ENCODE measurements at regions of chr1 and their contacts with region 1.

Region 1: DNA sequence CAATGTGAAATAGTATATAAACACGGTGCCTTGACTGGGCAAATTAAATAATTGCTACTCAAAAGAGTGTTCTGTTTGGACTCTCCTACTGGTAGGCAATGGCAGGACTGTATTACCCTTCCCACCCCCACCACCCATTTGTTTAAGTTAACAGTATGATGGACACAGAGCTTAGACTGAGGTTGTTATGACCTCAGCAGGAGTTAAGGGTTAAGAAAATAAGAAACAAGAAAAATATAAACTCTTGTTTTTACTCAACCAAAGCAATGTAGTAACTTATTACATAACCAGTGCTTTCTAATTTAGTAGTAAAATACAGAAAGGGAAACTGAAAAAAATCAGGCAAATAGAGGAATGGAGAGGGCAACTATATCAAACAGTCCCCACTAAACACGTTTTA is 19.9 kb upstream of the SERPINC1 start:
- DNase-seq: no peak
- H3K4me3 ChIP-seq: no peak overlapping the region
- H3K27ac ChIP-seq: no peak overlapping the region
- H3K4me1 ChIP-seq: no peaks in the 10 kb centered on the region
- H3K27me3 ChIP-seq: no peaks in the 10 kb centered on the region
- CTCF ChIP-seq: no peak

Region 2: GRCh38 chr1:173590557-173590956 is 346.5 kb before region 1 on chr1:
- intact Hi-C with region 1: no loop called
- DNase-seq: no peak
- H3K4me3 ChIP-seq: no peak overlapping the region
- H3K27ac ChIP-seq: no peak overlapping the region
- H3K4me1 ChIP-seq: no peaks in the 10 kb centered on the region
- H3K27me3 ChIP-seq: no peaks in the 10 kb centered on the region
- CTCF ChIP-seq: no peak

Region 3: DNA sequence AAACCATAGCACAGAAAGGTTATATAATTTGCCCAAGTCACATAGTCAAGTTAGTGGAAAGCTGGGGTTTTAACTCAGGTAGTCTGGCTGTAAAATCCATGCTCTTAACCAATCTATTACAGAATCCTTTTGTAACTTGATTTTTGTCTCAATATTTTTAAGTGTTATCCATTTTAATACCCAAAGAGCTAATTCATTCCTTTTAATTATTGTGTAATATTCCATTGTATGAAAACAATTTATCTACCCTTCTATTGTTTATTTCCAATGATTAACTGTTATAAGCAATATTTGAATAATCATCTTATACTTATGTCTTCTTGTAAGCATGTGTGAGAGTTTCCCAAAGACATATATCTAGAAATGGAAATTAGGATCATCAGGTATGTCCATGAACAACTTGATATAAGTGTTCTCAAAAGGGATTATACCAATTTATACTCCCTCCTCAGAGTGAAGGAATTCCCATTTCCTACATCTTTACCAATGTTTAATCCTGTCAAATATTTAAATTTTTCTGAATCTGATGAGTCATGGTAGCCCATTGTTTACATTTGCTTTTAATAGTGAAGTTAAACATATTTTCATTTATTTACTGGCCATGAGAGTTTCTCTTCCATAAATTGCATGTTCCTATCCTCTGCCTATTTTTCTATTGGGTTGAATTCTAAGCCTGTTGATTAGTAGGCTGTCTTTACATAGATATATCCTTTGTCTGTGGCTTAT is 288.0 kb before region 1 on chr1:
- intact Hi-C with region 1: no loop called
- DNase-seq: no peak
- H3K4me3 ChIP-seq: no peak overlapping the region
- H3K27ac ChIP-seq: no peak overlapping the region
- H3K4me1 ChIP-seq: no peaks in the 10 kb centered on the region
- H3K27me3 ChIP-seq: no peaks in the 10 kb centered on the region
- CTCF ChIP-seq: no peak

Region 4: DNA sequence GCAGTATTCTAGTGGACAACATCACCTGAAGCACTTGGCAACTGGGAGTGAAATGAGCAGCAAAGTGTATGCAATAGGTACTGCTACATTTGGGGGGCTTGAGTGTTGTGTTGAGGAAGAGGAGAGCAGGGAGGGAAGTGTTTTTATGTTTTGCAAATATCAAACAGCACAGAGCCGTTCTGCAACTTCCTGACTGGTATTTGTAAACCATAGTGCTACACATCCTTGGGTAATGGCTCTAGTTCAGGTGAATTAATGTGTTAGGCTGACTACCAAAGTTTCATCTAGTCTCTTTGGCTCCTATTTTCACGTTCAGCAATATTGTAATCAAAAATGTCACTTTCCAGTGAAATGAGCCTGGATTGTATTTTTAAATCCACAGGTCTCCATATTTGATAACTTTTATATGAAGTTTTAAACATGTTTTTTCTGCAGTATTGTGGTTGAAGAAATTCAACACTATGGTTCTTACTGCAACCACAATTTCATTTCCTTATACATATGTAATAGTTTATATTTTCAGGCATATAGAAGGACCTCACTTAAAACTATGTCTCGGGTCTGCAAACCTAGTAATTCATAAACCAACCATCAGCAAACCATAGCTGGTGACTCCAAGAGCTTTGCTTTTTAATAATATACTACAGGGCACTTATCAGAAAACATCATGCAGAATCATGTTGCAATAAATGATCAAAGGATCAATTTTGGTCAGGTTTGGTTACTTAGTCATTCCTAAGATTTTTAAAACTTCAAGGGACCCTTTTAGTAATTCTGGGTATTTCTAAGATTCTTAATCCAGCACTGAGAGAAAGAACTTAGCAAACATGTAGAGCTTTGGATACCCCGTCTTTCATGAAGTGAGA is 50.1 kb before region 1 on chr1:
- intact Hi-C with region 1: no loop called
- DNase-seq: no peak
- H3K4me3 ChIP-seq: no peak overlapping the region
- H3K27ac ChIP-seq: no peak overlapping the region
- H3K4me1 ChIP-seq: no peaks in the 10 kb centered on the region
- H3K27me3 ChIP-seq: no peaks in the 10 kb centered on the region
- CTCF ChIP-seq: no peak

Region 5: DNA sequence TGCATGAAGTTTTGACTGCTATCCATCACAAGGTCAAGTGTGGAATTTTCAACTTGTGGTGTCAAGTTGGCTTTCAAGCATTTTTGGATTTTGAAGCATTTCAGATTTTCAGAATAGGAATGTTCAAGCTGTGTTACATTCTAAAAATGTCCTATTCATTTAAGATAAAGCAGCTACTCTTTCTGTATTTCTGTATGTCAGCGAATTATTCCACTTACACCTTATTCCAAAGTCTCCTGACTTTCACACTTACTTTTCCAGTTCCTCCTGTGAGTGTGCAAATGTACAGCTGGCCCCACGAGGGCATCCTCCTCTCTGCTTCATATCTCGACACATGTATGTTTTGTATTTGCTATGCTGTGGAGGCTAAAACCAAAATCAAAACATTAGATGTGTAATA is 33.2 kb after region 1 on chr1:
- intact Hi-C with region 1: loop called (anchors 5 kb)
- DNase-seq: no peak
- H3K4me3 ChIP-seq: no peak overlapping the region
- H3K27ac ChIP-seq: no peak overlapping the region
- H3K4me1 ChIP-seq: no peaks in the 10 kb centered on the region
- H3K27me3 ChIP-seq: no peaks in the 10 kb centered on the region
- CTCF ChIP-seq: no peak

Region 6: DNA sequence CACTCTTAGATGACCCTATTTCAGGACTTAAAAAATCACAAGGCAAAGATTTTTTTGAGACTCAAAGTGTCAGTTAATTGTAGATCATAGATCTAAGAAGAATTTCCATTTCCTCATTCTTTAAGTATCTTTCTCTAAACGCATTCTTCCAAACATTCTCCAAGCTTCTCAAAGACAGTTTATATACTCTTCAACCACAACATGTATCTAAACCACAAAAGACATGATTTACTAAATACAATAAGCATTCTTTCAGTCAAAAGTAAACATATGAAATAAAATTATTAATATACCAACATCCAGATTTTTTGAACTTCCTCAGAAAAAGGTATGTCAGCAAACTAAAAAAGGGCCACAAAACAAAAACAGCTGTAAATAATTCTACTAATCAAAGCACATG is 60.7 kb after region 1 on chr1:
- intact Hi-C with region 1: no loop called
- DNase-seq: no peak
- H3K4me3 ChIP-seq: no peak overlapping the region
- H3K27ac ChIP-seq: no peak overlapping the region
- H3K4me1 ChIP-seq: peaks cover 0 to 34% (median 4%) of the 10 kb centered on the region in 4 donors
- H3K27me3 ChIP-seq: no peaks in the 10 kb centered on the region
- CTCF ChIP-seq: no peak

Measured in tibial artery (tissue), 4 donors.